ENCODE measurements at regions of chr5 and their contacts with region 1.

Region 1: GRCh38 chr5:55159763-55160492 is at the start of gene GPX8:
- DNase-seq: no peak
- H3K4me3 ChIP-seq: peak within 1 kb of the TSS in 3 of 4 donors; percentile 17 to 48 (median 29)
- H3K27ac ChIP-seq: peak within 1 kb of the TSS; percentile 63 to 74 (median 65)
- H3K4me1 ChIP-seq: peaks cover 0 to 15% (median 0%) of the 10 kb centered on the region in 4 donors
- H3K27me3 ChIP-seq: peaks cover 13% of the 10 kb centered on the region
- CTCF ChIP-seq: peak; percentile 26 to 48 (median 38)
- EP300 ChIP-seq: no peak
- POLR2A ChIP-seq: no peak
- total RNA-seq, gene GPX8: 2.7 to 4.0 (median 3.5) TPM in 3 of 4 donors, not detected in the other

Region 2: GRCh38 chr5:54905943-54906537 is 253.9 kb before region 1 on chr5:
- in situ Hi-C with region 1: loop called in 1 of 4 experiments (anchors 10 kb)
- intact Hi-C with region 1: loop called (anchors 10 kb)
- DNase-seq: peak; percentile 60
- H3K4me3 ChIP-seq: no peak overlapping the region
- H3K27ac ChIP-seq: no peak overlapping the region
- H3K4me1 ChIP-seq: no peaks in the 10 kb centered on the region
- H3K27me3 ChIP-seq: no peaks in the 10 kb centered on the region
- CTCF ChIP-seq: peak; percentile 27 to 56 (median 46)
- EP300 ChIP-seq: no peak
- POLR2A ChIP-seq: no peak

Region 3: DNA sequence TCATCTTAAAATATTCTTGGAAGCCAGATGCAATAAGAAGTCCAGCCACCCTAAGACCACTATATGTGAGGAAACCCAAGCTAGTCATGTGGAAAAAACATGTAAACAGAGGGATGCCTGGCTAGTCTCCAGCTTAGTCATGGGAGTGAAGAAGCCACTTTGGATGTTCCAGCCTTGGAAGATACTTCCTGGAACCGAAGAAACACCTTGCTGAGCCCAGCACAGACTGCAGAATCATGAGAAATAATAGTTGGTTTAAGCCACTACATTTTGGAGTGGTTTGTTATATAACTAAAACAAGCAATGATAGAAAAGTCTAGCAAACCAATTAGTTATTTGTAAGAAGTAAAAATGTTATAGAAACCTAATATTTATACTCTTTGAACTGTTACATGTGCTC is 135.0 kb after region 1 on chr5:
- in situ Hi-C with region 1: no loop called
- intact Hi-C with region 1: no loop called
- DNase-seq: no peak
- H3K4me3 ChIP-seq: no peak overlapping the region
- H3K27ac ChIP-seq: no peak overlapping the region
- H3K4me1 ChIP-seq: no peaks in the 10 kb centered on the region
- H3K27me3 ChIP-seq: no peaks in the 10 kb centered on the region
- CTCF ChIP-seq: no peak
- EP300 ChIP-seq: no peak
- POLR2A ChIP-seq: no peak

Measured in transverse colon (tissue), 4 donors.